ENCODE measurements at regions of chr1 and their contacts with region 1.

Region 1: GRCh38 chr1:37514350-37515184 is at the start of gene MEAF6:
- DNase-seq: peak; percentile 77
- H3K4me3 ChIP-seq: peak within 1 kb of the TSS; percentile 86 to 98 (median 87)
- H3K27ac ChIP-seq: peak within 1 kb of the TSS; percentile 92
- H3K4me1 ChIP-seq: peaks cover 14% of the 10 kb centered on the region
- H3K27me3 ChIP-seq: no peaks in the 10 kb centered on the region
- CTCF ChIP-seq: peak; percentile 36 to 44
- total RNA-seq, gene MEAF6: 61.5 to 64.9 TPM

Region 2: DNA sequence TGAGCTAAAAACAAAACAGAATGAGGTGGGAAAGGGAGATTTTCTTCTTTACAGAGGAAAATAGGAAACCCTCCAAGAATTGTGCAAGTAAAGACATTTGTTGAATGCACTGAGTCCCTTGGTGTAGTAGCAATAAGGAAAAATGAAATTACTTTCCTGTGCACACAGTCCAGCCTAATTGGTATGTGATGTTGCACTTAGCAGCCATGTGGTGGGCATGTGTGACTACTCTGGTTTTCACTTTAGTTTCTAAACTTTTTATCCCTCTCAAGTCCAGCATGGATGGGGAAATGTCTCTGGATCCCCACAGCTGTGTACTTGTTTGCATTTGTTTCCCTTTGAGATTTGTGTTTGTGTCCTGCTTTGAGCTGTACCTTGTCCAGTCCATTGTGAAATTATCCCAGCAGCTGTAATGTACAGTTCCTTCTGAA is 1590.8 kb before region 1 on chr1:
- CTCF ChIA-PET with region 1: interaction called, 24 read pairs
- dilution Hi-C with region 1: no loop called
- in situ Hi-C with region 1: no loop called
- intact Hi-C with region 1: no loop called
- DNase-seq: no peak
- H3K4me3 ChIP-seq: no peak overlapping the region
- H3K27ac ChIP-seq: no peak overlapping the region
- H3K4me1 ChIP-seq: no peaks in the 10 kb centered on the region
- H3K27me3 ChIP-seq: no peaks in the 10 kb centered on the region
- CTCF ChIP-seq: no peak

Region 3: GRCh38 chr1:37323486-37324377 is 190.8 kb before region 1 on chr1:
- CTCF ChIA-PET with region 1: no interaction called
- dilution Hi-C with region 1: no loop called
- in situ Hi-C with region 1: no loop called
- intact Hi-C with region 1: no loop called
- DNase-seq: peak; percentile 11
- H3K4me3 ChIP-seq: no peak overlapping the region
- H3K27ac ChIP-seq: no peak overlapping the region
- H3K4me1 ChIP-seq: no peaks in the 10 kb centered on the region
- H3K27me3 ChIP-seq: peaks cover 2% of the 10 kb centered on the region
- CTCF ChIP-seq: peak; percentile 79 to 88

Region 4: DNA sequence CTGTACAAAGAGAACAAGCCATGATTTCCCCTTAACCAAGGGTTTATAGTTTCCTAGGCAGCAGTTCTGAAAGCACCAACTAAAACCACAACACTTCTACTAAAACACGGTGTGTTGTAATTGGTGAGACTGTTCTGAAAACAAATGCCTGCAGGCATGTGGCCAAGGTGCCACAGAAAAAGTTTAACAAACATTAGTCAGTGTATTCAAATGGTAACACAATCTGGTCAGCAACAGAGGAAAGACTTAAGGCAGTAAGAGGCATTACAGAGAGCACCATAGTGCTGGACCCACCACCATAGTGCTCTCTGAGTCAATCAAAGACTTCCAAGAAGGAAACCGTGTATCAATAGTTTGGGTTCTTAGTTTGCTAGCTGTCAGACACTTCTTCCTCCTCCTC is 22.8 kb after region 1 on chr1:
- CTCF ChIA-PET with region 1: interaction called, 4 read pairs
- dilution Hi-C with region 1: no loop called
- in situ Hi-C with region 1: no loop called
- intact Hi-C with region 1: loop called (anchors 2 kb)
- DNase-seq: peak; percentile 84
- H3K4me3 ChIP-seq: no peak overlapping the region
- H3K27ac ChIP-seq: peak overlapping the region; percentile 45
- H3K4me1 ChIP-seq: peaks cover 28% of the 10 kb centered on the region
- H3K27me3 ChIP-seq: no peaks in the 10 kb centered on the region
- CTCF ChIP-seq: no peak

Region 5: DNA sequence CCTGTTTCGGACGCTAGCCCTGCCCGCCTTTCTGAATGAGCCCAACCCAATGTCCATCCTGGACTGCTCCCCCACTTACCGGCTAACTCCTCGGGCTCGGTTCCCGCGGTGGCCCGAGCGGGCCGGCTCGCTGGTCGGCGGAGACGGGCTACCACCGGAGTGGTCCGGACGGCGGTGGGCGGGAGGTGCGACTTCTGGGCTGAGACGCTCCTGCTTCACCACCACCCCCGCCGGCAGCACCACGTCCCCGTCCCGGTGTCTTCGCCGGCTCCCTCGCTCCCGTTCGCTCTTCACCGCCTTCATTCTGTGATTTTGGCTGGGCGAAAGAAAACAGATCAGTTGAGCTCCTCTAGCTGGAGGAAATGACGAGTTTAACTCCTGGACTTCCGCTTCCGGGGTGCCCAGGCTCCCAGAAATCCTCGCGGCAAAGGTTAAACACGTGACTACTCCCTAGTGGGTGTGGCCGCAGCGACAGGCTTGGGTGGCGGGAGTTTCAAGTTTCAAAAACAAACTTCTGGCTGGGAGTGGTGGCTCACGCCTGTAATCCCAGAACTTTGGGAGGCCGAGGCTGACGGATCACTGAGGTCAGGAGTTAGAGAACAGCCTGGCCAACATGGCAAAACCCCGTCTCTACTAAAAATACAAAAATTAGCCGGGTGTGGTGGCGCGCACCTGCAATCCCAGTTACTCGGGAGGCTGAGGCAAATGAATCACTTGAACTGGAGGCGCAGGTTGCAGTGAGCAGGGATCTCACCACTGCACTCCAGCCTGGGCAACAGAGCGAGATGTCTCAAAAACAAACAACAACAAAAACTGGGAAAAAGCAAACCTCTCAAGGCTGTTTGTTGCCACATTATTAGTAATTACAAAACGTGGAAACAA is 39.6 kb after region 1 on chr1 and contains the start of gene SNIP1:
- CTCF ChIA-PET with region 1: interaction called, 10 read pairs
- dilution Hi-C with region 1: no loop called
- in situ Hi-C with region 1: no loop called
- intact Hi-C with region 1: loop called (anchors 2 kb)
- DNase-seq: peak; percentile 88
- H3K4me3 ChIP-seq: peak within 1 kb of the TSS; percentile 93 to 97 (median 97)
- H3K27ac ChIP-seq: peak within 1 kb of the TSS; percentile 85
- H3K4me1 ChIP-seq: peaks cover 19% of the 10 kb centered on the region
- H3K27me3 ChIP-seq: no peaks in the 10 kb centered on the region
- CTCF ChIP-seq: no peak
- total RNA-seq, gene SNIP1: 22.5 to 23.0 TPM